Activated B cell treated with CpG ODN at 0.5 μM for 24 hours (primary cell): ENCODE measurements at regions of chr7 and their contacts with region 1.

Region 1: DNA sequence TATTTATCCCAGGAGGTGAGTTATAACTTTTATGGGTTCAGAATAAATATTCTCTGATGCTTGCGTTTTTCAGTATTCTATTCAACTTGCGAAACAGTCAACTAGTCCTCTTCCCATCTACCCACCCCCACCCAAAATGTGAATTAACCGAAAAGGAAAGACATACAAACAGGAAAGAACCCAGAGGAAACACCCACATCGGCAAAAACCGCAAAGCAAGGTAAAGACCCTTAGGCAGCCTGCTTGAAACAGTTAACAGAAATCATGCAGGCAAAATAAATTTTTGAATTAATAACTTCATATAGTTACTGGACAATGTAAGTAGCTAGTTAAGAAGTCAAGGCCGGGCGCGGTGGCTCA is 5.4 kb downstream of the ZC3HAV1 start:
- DNase-seq: no peak
- ATAC-seq: no peak
- H3K4me3 Mint-ChIP-seq: peak overlapping the region; percentile 82
- H3K27ac Mint-ChIP-seq: peak overlapping the region; percentile 87
- H3K4me1 Mint-ChIP-seq: peaks cover 67% of the 10 kb centered on the region
- H3K27me3 Mint-ChIP-seq: no peaks in the 10 kb centered on the region
- CTCF ChIP-seq: no peak

Region 2: GRCh38 chr7:139081584-139081983 is 22.5 kb before region 1 on chr7:
- CTCF ChIA-PET with region 1: no interaction called
- POLR2A ChIA-PET with region 1: no interaction called
- intact Hi-C with region 1: no loop called
- DNase-seq: no peak
- ATAC-seq: no peak
- H3K4me3 Mint-ChIP-seq: no peak overlapping the region
- H3K27ac Mint-ChIP-seq: no peak overlapping the region
- H3K4me1 Mint-ChIP-seq: peaks cover 22% of the 10 kb centered on the region
- H3K27me3 Mint-ChIP-seq: no peaks in the 10 kb centered on the region
- CTCF ChIP-seq: no peak

Region 3: GRCh38 chr7:139118234-139118804 is 14.2 kb after region 1 on chr7:
- CTCF ChIA-PET with region 1: interaction called, 3 read pairs
- POLR2A ChIA-PET with region 1: interaction called, 28 read pairs
- intact Hi-C with region 1: loop called (anchors 1 kb)
- DNase-seq: no peak
- ATAC-seq: peak; percentile 23
- H3K4me3 Mint-ChIP-seq: peak overlapping the region; percentile 68
- H3K27ac Mint-ChIP-seq: peak overlapping the region; percentile 91
- H3K4me1 Mint-ChIP-seq: peaks cover 31% of the 10 kb centered on the region
- H3K27me3 Mint-ChIP-seq: no peaks in the 10 kb centered on the region
- CTCF ChIP-seq: no peak

Region 4: DNA sequence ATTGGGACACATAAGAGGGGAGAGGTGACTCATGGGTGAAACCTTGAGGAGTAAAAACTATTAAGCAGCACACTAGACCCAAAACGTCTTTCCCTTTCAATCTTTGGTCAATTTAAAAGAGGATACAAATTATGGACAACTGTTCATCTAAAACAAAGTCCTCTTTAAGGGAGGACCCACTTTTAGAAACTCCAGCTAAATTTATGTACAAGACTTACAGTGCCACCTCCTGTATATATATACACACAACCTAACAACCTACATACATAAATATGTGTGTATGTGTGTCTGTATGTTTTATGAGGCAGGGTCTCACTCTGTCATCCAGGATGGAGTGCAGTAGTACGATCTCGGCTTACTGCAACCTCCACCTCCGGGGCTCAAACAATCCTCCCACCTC is 23.6 kb after region 1 on chr7:
- CTCF ChIA-PET with region 1: interaction called, 5 read pairs
- POLR2A ChIA-PET with region 1: interaction called, 10 read pairs
- intact Hi-C with region 1: no loop called
- DNase-seq: no peak
- ATAC-seq: peak; percentile 49
- H3K4me3 Mint-ChIP-seq: no peak overlapping the region
- H3K27ac Mint-ChIP-seq: no peak overlapping the region
- H3K4me1 Mint-ChIP-seq: peaks cover 35% of the 10 kb centered on the region
- H3K27me3 Mint-ChIP-seq: no peaks in the 10 kb centered on the region
- CTCF ChIP-seq: no peak

Region 5: GRCh38 chr7:139133335-139134139 is 29.5 kb after region 1 on chr7:
- CTCF ChIA-PET with region 1: no interaction called
- POLR2A ChIA-PET with region 1: interaction called, 11 read pairs
- intact Hi-C with region 1: loop called (anchors 1 kb)
- DNase-seq: peak; percentile 77
- ATAC-seq: peak; percentile 98
- H3K4me3 Mint-ChIP-seq: peak overlapping the region; percentile 87
- H3K27ac Mint-ChIP-seq: peak overlapping the region; percentile 81
- H3K4me1 Mint-ChIP-seq: peaks cover 9% of the 10 kb centered on the region
- H3K27me3 Mint-ChIP-seq: no peaks in the 10 kb centered on the region
- CTCF ChIP-seq: no peak

Region 6: DNA sequence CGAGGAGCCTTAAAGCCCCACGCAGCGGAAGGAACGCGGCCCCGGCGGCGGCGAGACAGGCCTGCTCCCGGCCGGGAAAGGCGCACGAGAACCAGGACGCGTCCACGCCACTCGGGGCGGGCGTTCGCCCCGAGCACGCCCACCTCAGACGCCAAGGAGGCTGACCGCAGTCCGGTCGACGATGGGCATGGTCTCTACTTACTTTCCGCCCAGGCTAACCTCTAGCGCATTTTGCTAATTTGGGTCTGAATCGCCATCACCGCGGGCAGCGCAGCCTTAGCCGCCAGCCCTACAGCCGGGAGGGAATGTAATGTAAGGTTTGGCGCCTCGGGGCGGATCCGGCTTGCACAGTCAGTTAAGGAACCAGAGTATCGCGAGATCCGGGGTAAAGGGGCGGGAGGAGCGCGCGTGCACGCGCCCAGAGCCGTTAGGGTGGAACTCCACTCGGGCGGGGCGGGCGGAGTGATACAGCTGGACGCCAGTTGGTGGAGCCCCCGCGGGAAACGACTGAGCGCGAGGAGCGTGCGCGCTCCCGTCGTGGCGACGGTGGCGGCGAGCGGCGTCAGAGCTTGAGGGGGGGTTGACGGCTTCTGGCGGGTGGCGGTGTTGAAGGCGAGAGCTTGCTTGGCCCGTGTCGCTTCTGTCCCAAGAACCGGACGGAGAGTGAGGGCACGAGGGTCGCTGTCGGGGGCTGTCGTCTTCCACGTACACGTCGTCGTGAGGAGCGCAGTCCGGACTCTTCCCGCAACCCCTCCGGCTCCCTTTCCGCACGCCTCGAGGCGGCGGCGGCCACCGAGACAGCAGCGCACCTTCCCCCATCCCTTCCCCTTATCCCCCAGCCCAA is 255.5 kb after region 1 on chr7 and contains the start of gene LUC7L2:
- CTCF ChIA-PET with region 1: no interaction called
- POLR2A ChIA-PET with region 1: interaction called, 15 read pairs
- intact Hi-C with region 1: loop called (anchors 1 kb)
- DNase-seq: peak; percentile 97
- ATAC-seq: peak; percentile 78
- H3K4me3 Mint-ChIP-seq: peak within 1 kb of the TSS; percentile 98
- H3K27ac Mint-ChIP-seq: peak within 1 kb of the TSS; percentile 100
- H3K4me1 Mint-ChIP-seq: peaks cover 41% of the 10 kb centered on the region
- H3K27me3 Mint-ChIP-seq: no peaks in the 10 kb centered on the region
- CTCF ChIP-seq: no peak
- total RNA-seq, gene LUC7L2: 94.0 and 118 TPM in 2 replicates

Region 7: GRCh38 chr7:139855498-139856270 is 751.6 kb after region 1 on chr7:
- CTCF ChIA-PET with region 1: no interaction called
- POLR2A ChIA-PET with region 1: no interaction called
- intact Hi-C with region 1: no loop called
- DNase-seq: peak; percentile 20
- ATAC-seq: peak; percentile 68
- H3K4me3 Mint-ChIP-seq: no peak overlapping the region
- H3K27ac Mint-ChIP-seq: peak overlapping the region; percentile 63
- H3K4me1 Mint-ChIP-seq: peaks cover 30% of the 10 kb centered on the region
- H3K27me3 Mint-ChIP-seq: no peaks in the 10 kb centered on the region
- CTCF ChIP-seq: no peak